ENCODE measurements at regions of chr20 and their contacts with region 1.

Region 1: DNA sequence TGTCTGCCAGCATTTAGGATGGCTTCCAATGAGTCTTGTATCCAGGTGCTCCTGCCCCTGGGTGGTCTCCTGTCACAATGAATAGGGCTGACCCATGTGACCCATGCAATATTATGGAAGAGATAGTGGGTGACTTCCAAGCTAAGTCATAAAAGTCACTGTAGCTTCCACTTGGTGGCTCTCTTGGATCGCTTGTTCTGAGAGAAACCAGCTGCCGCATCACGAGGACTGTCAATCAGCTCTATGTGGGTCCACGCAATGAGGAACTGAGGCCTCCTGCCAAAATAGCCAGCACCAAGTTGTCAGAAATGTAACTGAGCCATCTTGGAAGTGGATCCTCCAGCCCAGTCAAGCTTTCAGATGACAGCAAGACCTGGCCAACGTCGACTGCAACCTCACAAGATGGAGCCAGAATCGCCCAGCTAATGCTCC is 14.9 kb upstream of the MATN4 start:
- DNase-seq: no peak
- ATAC-seq: no peak
- H3K4me3 Mint-ChIP-seq: no peak overlapping the region
- H3K27ac Mint-ChIP-seq: no peak overlapping the region
- H3K4me1 Mint-ChIP-seq: peaks cover 40% of the 10 kb centered on the region
- H3K27me3 Mint-ChIP-seq: no peaks in the 10 kb centered on the region

Region 2: DNA sequence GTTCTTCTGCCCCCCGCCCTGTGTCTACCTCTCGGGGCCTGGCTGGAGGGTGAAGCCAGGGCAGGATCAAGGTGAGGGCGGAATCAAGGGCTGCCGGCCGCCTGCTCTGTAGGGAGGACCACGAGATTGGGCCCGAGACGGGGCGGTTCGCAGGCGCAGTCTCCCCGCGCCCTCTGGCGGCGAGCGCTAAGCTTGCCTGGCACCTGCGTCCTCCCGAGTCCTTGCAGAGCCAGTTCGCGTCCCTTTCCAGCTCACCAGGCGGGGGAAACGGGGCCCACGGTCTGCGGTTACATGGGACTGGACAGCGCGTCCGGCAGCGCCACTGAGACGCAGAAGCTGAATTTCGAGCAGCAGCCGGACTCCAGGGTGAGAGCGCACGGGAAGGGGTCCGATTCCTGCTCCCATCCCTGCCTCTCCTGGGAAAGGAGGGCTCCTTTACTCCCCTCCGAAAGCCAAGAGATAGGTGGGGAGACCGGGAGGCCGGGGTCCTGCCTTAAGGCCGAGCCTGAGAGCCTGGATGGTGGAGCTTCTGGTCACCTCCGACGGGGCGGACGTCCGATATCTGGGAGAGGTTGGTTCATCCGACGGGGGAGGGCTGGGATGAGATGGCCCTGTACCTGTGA is 11.3 kb before region 1 on chr20:
- CTCF ChIA-PET with region 1: interaction called, 14 read pairs
- POLR2A ChIA-PET with region 1: no interaction called
- DNase-seq: peak; percentile 70
- ATAC-seq: peak; percentile 82
- H3K4me3 Mint-ChIP-seq: no peak overlapping the region
- H3K27ac Mint-ChIP-seq: no peak overlapping the region
- H3K4me1 Mint-ChIP-seq: peaks cover 9% of the 10 kb centered on the region
- H3K27me3 Mint-ChIP-seq: peaks cover 38% of the 10 kb centered on the region

Region 3: GRCh38 chr20:45355209-45356084 is 32.5 kb after region 1 on chr20:
- CTCF ChIA-PET with region 1: interaction called, 65 read pairs
- POLR2A ChIA-PET with region 1: no interaction called
- DNase-seq: no peak
- ATAC-seq: peak; percentile 69
- H3K4me3 Mint-ChIP-seq: peak overlapping the region; percentile 11
- H3K27ac Mint-ChIP-seq: peak overlapping the region; percentile 70
- H3K4me1 Mint-ChIP-seq: peaks cover 59% of the 10 kb centered on the region
- H3K27me3 Mint-ChIP-seq: peaks cover 2% of the 10 kb centered on the region

Region 4: GRCh38 chr20:45450097-45450818 is 127.3 kb after region 1 on chr20:
- CTCF ChIA-PET with region 1: interaction called, 76 read pairs
- POLR2A ChIA-PET with region 1: no interaction called
- DNase-seq: peak; percentile 42
- ATAC-seq: peak; percentile 50
- H3K4me3 Mint-ChIP-seq: no peak overlapping the region
- H3K27ac Mint-ChIP-seq: no peak overlapping the region
- H3K4me1 Mint-ChIP-seq: peaks cover 17% of the 10 kb centered on the region
- H3K27me3 Mint-ChIP-seq: peaks cover 9% of the 10 kb centered on the region